ENCODE measurements at regions of chr1 and their contacts with region 1.

Region 1: GRCh38 chr1:42777852-42778251 is 6.9 kb upstream of the TMEM269 start:
- DNase-seq: peak in 1 of 2 experiments; percentile 51
- H3K4me3 ChIP-seq: no peak overlapping the region
- H3K4me3 Mint-ChIP-seq: no peak overlapping the region
- H3K27ac Mint-ChIP-seq: no peak overlapping the region
- H3K4me1 ChIP-seq: no peaks in the 10 kb centered on the region
- H3K4me1 Mint-ChIP-seq: no peaks in the 10 kb centered on the region
- H3K27me3 ChIP-seq: no peaks in the 10 kb centered on the region
- H3K27me3 Mint-ChIP-seq: no peaks in the 10 kb centered on the region
- CTCF ChIP-seq: peak; percentile 50 to 61

Region 2: DNA sequence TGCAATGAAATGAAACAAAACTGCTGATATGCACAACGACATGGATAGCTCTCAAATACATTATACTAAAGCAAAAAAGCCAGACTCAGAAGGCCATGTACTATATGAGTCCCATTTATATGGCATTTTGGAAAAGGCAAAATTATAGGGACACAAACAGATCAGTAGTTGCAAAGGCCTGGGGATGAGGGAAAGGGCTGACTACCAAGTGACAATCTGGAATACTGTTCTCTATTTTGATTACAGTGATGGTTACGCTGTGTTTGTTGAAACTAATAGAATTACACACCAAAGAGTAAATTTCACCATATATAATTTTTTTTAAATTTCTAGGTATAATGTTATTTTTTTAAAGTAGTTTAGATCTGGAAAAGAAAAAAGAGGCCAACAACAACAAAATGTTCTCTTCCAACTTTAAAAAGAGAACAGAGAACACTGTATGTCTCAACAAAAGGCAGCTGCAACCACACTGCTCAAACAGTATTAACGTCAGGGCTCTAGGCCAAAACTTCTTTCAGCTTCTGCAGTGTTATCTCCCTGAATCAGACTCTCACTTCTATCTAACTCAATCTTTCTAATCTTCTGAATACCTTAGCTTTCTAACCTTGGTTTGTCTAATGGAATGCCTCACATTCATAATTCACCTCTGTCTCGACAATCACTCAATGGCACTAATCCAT is 518.7 kb before region 1 on chr1:
- CTCF ChIA-PET with region 1: no interaction called
- POLR2A ChIA-PET with region 1: no interaction called
- intact Hi-C with region 1: no loop called
- DNase-seq: no peak
- H3K4me3 ChIP-seq: no peak overlapping the region
- H3K4me3 Mint-ChIP-seq: no peak overlapping the region
- H3K27ac Mint-ChIP-seq: no peak overlapping the region
- H3K4me1 ChIP-seq: peaks cover 5% of the 10 kb centered on the region; the same call in 1 of the 2 replicates
- H3K4me1 Mint-ChIP-seq: peaks cover 17% of the 10 kb centered on the region
- H3K27me3 ChIP-seq: no peaks in the 10 kb centered on the region
- H3K27me3 Mint-ChIP-seq: no peaks in the 10 kb centered on the region
- CTCF ChIP-seq: no peak

Region 3: GRCh38 chr1:42913426-42914091 is 135.7 kb after region 1 on chr1:
- CTCF ChIA-PET with region 1: interaction called, 7 read pairs
- POLR2A ChIA-PET with region 1: no interaction called
- intact Hi-C with region 1: loop called (anchors 1 kb)
- DNase-seq: peak; percentile 65 to 72
- H3K4me3 ChIP-seq: no peak overlapping the region
- H3K4me3 Mint-ChIP-seq: no peak overlapping the region
- H3K27ac Mint-ChIP-seq: no peak overlapping the region
- H3K4me1 ChIP-seq: no peaks in the 10 kb centered on the region
- H3K4me1 Mint-ChIP-seq: no peaks in the 10 kb centered on the region
- H3K27me3 ChIP-seq: no peaks in the 10 kb centered on the region
- H3K27me3 Mint-ChIP-seq: no peaks in the 10 kb centered on the region
- CTCF ChIP-seq: peak; percentile 74 to 76

Measured in Caco-2 (cell line).